CD4-positive, alpha-beta T cell (primary cell): ENCODE measurements at regions of chr12 and their contacts with region 1.

Region 1: DNA sequence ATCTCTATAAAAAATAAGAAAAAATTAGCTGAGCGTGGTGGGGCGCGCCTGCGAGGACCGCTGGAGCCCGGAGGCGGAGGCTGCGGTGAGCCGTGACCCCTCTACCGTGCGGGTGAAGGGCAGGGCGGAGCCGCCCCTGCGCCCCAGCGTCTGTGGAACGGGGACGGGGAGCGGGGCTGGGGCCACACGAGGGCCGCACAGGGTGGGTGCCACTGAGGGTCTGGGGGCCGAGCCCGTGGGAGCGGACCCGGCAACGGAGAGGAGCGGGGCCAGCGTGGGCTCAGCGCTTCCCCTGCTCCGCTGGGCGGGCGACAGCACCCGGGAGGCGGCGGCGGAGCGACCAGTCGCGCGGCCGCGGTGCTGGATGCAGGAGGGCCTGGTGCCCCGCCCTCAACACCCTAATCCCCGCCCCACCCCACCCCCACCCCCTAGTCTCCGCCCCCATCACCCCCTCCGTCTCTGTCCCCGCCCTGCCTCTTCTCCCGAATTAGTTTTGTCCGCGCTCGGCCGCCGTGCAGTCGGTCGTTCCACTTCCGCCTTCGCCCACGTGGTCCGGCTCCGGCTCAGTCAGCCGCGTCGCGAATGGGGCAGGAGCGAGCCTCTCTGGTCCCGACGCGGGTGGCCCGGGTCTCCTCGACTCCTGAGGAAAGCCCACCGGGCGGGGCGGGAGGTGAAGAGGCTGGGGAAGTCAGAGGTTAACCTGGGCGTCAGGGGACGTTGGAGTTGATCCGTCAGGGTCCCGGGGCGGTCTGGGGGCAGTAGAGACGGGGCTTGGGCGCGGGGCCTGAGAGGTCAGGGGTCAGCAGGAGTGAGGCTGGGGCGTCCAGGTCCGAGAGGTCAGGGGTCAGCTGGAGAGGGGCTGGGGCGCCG is at the start of gene PUS1:
- DNase-seq: peak; percentile 87 to 97 (median 92)
- ATAC-seq: peak; percentile 84
- H3K4me3 ChIP-seq: peak within 1 kb of the TSS; percentile 96
- H3K4me3 Mint-ChIP-seq: peak within 1 kb of the TSS; percentile 97
- H3K27ac ChIP-seq: peak within 1 kb of the TSS; percentile 55 to 61
- H3K27ac Mint-ChIP-seq: peak within 1 kb of the TSS; percentile 82
- H3K4me1 ChIP-seq: peaks cover 28% of the 10 kb centered on the region
- H3K4me1 Mint-ChIP-seq: peaks cover 35% of the 10 kb centered on the region
- H3K27me3 ChIP-seq: no peaks in the 10 kb centered on the region
- H3K27me3 Mint-ChIP-seq: no peaks in the 10 kb centered on the region
- CTCF ChIP-seq: no peak
- total RNA-seq, gene PUS1: 17.7 to 18.2 TPM

Region 2: DNA sequence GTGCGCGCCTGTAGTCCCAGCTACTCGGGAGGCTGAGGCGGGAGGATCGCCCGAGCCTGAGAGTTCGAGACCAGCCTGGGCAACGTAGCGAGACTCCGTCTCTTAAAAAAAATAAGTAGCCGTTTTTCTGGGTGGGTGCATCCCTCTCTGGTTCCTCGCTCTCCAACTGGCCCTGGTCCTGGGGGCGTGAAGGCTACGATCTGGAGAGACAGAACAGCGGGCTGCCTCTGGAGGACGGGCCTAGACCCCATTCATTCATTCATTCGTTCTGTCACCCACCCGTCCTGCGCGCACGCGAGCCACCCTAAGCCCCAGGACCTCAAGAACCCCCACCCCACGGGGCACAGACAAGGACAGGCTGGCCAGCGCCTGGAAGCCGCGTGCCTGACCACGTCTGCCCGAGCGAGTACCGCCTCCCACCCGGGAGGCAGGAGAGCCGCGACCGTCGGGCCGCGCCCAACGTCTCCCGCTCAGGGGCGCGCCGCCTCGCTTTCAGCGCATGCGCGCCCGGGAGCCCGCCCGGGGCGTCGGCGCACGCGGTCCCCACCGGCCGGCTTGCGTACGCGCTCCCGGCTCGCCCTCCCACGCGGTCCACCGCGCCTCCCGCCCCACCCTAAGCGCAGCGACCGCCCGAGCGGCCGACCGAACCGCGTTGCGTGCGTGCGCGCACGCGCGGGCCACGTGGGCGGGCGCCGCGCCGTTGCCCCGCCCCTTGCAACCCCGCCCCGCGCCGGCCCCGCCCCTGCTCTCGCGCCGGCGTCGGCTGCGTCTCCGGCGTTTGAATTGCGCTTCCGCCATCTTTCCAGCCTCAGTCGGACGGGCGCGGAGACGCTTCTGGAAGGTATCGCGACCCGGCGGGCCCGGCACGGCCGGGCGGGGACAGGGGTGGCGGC is 1057.4 kb before region 1 on chr12 and contains the start of gene RAN:
- CTCF ChIA-PET with region 1: no interaction called
- POLR2A ChIA-PET with region 1: interaction called, 3 read pairs
- intact Hi-C with region 1: loop called in 1 of 2 experiments (anchors 10 kb)
- DNase-seq: peak; percentile 79 to 98 (median 90)
- ATAC-seq: peak; percentile 68
- H3K4me3 ChIP-seq: peak within 1 kb of the TSS; percentile 84
- H3K4me3 Mint-ChIP-seq: peak within 1 kb of the TSS; percentile 93
- H3K27ac ChIP-seq: peak within 1 kb of the TSS; percentile 79 to 89
- H3K27ac Mint-ChIP-seq: peak within 1 kb of the TSS; percentile 95
- H3K4me1 ChIP-seq: peaks cover 56% of the 10 kb centered on the region
- H3K4me1 Mint-ChIP-seq: peaks cover 65% of the 10 kb centered on the region
- H3K27me3 ChIP-seq: no peaks in the 10 kb centered on the region
- H3K27me3 Mint-ChIP-seq: no peaks in the 10 kb centered on the region
- CTCF ChIP-seq: no peak
- total RNA-seq, gene RAN: 278 to 302 TPM

Region 3: DNA sequence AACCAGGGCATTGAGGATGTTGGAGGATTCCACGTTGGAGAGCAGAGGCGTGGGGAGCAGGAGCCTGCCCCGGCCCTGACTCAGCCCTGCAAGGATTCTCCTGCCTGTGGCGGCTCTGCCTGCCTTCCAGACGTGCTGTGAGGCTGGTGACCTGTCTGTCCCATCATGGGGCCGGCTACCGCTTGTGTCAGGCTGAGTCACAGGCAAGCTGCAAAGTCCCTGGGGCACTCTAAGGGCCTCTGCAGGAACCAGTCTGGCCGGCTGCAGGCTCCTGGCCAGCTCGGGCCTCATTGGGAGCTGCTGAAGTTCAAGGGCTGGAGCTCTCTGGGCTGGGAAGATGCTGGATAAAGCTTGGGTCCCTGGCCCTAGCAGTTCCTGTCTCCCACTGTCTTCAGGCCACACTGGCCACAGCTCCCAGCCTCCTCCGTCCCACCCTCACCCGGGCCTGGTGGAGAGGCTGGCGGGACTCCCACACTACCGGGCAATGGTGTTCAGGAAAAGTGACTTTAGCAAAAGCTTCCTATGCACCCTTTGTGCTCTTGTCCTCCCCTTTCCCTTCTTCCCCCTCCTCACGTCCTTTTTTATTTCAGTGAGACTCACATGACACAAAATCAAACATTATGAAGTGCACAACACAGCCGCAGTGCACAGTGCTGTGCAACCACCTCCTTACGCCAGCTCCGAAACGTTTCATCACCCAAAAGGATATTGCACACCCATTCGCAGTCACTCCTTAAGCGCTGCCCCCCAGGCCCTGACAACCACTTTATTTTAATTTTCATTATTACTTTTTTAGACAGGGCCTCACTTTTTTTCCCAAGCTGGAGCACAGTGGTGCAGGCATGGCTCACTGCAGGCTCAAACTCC is 56.5 kb before region 1 on chr12:
- CTCF ChIA-PET with region 1: no interaction called
- POLR2A ChIA-PET with region 1: no interaction called
- intact Hi-C with region 1: no loop called
- DNase-seq: peak in 2 of 14 experiments; percentile 30 to 54
- ATAC-seq: no peak
- H3K4me3 ChIP-seq: no peak overlapping the region
- H3K4me3 Mint-ChIP-seq: no peak overlapping the region
- H3K27ac ChIP-seq: no peak overlapping the region
- H3K27ac Mint-ChIP-seq: no peak overlapping the region
- H3K4me1 ChIP-seq: no peaks in the 10 kb centered on the region
- H3K4me1 Mint-ChIP-seq: no peaks in the 10 kb centered on the region
- H3K27me3 ChIP-seq: no peaks in the 10 kb centered on the region
- H3K27me3 Mint-ChIP-seq: no peaks in the 10 kb centered on the region
- CTCF ChIP-seq: no peak

Region 4: GRCh38 chr12:131894313-131894860 is 34.6 kb before region 1 on chr12 and contains the start of gene ULK1:
- CTCF ChIA-PET with region 1: no interaction called
- POLR2A ChIA-PET with region 1: interaction called, 3 read pairs
- intact Hi-C with region 1: loop called (anchors 1 to 2 kb)
- DNase-seq: peak; percentile 83 to 96 (median 92)
- ATAC-seq: peak; percentile 82
- H3K4me3 ChIP-seq: peak within 1 kb of the TSS; percentile 71
- H3K4me3 Mint-ChIP-seq: peak within 1 kb of the TSS; percentile 93
- H3K27ac ChIP-seq: peak within 1 kb of the TSS in 1 of 2 donors; percentile 13
- H3K27ac Mint-ChIP-seq: peak within 1 kb of the TSS; percentile 88
- H3K4me1 ChIP-seq: peaks cover 31% of the 10 kb centered on the region
- H3K4me1 Mint-ChIP-seq: peaks cover 25% of the 10 kb centered on the region
- H3K27me3 ChIP-seq: no peaks in the 10 kb centered on the region
- H3K27me3 Mint-ChIP-seq: no peaks in the 10 kb centered on the region
- CTCF ChIP-seq: no peak
- total RNA-seq, gene ULK1: 85.0 to 91.6 TPM